SK-N-SH (cell line): ENCODE measurements at regions of chr7 and their contacts with region 1.

Region 1: DNA sequence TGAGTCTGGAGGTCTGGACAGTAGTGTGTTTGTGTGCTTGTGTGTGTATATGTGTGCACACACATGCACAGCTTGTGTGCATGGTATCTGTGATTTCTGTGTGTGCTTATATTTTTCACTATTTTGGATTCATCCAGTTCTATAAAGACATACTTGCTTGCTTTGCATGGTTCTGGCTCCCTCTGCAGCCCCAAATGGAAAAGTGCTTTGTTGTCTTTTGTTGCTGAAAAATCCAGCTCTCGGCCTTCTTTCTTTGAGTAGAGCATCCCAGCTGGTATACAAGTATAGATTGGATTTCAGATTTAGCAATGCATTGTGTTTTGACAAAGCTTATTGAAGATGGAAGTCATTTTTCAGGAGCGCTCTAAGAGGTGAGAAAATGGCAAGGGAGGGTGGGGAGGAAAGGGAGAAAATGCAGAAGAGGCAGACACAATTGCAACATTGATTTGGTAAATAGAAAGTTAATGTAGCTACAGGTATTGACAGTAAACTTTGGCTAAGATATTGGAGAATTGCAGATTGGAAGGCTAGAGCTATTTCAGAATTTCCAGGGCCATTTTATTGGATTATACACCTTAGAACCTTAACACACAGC is 333.9 kb downstream of the AUTS2 start:
- DNase-seq: peak; percentile 61
- H3K4me3 ChIP-seq: no peak overlapping the region
- H3K27ac ChIP-seq: no peak overlapping the region
- H3K4me1 ChIP-seq: peaks cover 0 to 20% of the 10 kb centered on the region in 2 experiments; a peak in 2 of 4 replicates
- H3K27me3 ChIP-seq: no peaks in the 10 kb centered on the region
- CTCF ChIP-seq: peak; percentile 97
- EP300 ChIP-seq: no peak
- RAD21 ChIP-seq: peak; percentile 100

Region 2: DNA sequence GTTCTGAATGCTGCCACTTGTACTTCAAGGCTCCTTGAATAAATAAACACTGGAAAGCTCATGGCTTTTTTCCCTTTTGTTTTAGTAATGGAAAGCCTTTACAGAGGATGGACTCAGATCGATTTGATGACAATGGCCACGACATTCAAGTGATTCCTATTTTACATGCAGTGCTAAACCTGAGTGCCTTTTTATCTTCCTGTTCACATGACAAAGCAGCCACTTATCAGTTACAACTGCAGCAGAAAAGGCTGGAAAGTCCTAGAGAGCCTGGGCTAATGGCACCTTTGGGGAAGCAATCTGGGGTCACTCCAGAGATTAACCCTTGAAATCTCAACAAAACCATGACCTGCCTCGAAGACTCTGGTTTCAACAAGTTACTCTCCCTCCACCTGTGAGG is 582.8 kb before region 1 on chr7:
- CTCF ChIA-PET with region 1: no interaction called
- POLR2A ChIA-PET with region 1: no interaction called
- DNase-seq: no peak
- H3K4me3 ChIP-seq: no peak overlapping the region
- H3K27ac ChIP-seq: no peak overlapping the region
- H3K4me1 ChIP-seq: no peaks in the 10 kb centered on the region
- H3K27me3 ChIP-seq: no peaks in the 10 kb centered on the region
- CTCF ChIP-seq: no peak
- EP300 ChIP-seq: no peak
- RAD21 ChIP-seq: no peak

Region 3: DNA sequence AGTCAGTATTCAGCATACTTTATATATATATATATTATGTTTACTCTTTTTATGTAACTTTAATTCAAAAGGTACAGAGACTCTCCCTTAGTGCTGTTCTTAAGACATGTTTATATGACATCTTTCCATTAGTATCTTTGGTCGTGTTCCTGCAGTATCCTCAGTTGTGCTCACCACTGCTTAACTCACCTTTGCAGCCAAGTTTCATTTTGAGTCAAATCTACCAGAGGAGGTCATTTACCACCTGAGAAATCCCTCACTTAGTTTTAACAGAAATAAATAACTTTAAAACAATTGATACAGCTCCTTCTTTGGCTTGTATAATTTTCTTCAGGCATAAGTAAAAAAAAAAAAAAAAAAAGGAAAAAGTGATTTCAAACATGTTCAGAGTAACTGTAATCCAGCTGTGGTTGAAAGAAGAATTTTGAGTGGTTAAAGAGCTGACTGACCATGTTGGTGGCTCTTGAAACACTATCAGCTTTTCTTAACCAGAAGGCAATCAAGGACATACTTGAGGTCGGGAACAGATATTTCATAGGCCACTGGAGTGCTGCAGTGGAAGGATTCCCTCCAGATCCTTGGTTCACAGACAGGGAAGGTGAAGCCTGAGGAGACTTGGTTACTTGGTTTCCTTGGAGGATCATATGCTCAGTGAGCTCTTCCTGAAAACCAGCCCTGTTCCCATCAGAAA is 217.1 kb before region 1 on chr7:
- CTCF ChIA-PET with region 1: no interaction called
- POLR2A ChIA-PET with region 1: no interaction called
- DNase-seq: no peak
- H3K4me3 ChIP-seq: no peak overlapping the region
- H3K27ac ChIP-seq: no peak overlapping the region
- H3K4me1 ChIP-seq: peaks cover 0 to 3% of the 10 kb centered on the region in 2 experiments; a peak in 1 of 4 replicates
- H3K27me3 ChIP-seq: no peaks in the 10 kb centered on the region
- CTCF ChIP-seq: no peak
- EP300 ChIP-seq: no peak
- RAD21 ChIP-seq: no peak

Region 4: DNA sequence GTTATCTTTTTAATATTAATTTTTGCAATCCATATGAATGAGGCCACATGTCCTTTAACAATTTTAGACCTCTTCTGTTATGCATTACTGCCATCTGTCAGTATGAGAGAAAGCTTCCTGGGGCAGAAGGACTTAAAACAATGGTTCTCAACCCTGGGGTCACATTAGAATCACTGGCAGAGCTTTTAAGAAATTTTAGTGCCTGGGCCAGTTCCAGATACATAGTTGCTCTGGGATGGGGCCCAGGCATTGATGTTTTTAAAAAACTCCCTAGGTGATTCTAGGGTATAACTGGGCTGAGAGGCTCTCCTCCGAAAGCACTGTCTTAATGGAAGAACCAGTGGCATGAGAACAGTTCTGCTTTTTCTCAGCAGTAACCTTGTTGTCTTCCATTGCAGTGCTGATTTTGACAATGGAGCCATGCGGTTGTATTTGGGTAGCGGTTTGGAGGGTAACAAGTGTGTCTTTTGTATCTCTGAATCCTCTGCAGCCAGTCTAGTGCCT is 107.0 kb before region 1 on chr7:
- CTCF ChIA-PET with region 1: interaction called, 15 read pairs
- POLR2A ChIA-PET with region 1: no interaction called
- DNase-seq: peak; percentile 70
- H3K4me3 ChIP-seq: no peak overlapping the region
- H3K27ac ChIP-seq: peak overlapping the region in 1 of 2 experiments; percentile 93; a peak in 2 of 4 replicates
- H3K4me1 ChIP-seq: peaks cover 11 to 22% of the 10 kb centered on the region in 2 experiments
- H3K27me3 ChIP-seq: no peaks in the 10 kb centered on the region
- CTCF ChIP-seq: peak; percentile 40; the same call in 1 of the 2 replicates
- EP300 ChIP-seq: peak in 1 of 2 experiments; percentile 84; a peak in 2 of 4 replicates
- RAD21 ChIP-seq: peak; percentile 83

Region 5: GRCh38 chr7:69906283-69906995 is 25.7 kb before region 1 on chr7:
- CTCF ChIA-PET with region 1: interaction called, 18 read pairs
- POLR2A ChIA-PET with region 1: no interaction called
- DNase-seq: no peak
- H3K4me3 ChIP-seq: no peak overlapping the region
- H3K27ac ChIP-seq: no peak overlapping the region
- H3K4me1 ChIP-seq: peaks cover 10 to 16% of the 10 kb centered on the region in 2 experiments
- H3K27me3 ChIP-seq: no peaks in the 10 kb centered on the region
- CTCF ChIP-seq: no peak
- EP300 ChIP-seq: no peak
- RAD21 ChIP-seq: no peak

Region 6: DNA sequence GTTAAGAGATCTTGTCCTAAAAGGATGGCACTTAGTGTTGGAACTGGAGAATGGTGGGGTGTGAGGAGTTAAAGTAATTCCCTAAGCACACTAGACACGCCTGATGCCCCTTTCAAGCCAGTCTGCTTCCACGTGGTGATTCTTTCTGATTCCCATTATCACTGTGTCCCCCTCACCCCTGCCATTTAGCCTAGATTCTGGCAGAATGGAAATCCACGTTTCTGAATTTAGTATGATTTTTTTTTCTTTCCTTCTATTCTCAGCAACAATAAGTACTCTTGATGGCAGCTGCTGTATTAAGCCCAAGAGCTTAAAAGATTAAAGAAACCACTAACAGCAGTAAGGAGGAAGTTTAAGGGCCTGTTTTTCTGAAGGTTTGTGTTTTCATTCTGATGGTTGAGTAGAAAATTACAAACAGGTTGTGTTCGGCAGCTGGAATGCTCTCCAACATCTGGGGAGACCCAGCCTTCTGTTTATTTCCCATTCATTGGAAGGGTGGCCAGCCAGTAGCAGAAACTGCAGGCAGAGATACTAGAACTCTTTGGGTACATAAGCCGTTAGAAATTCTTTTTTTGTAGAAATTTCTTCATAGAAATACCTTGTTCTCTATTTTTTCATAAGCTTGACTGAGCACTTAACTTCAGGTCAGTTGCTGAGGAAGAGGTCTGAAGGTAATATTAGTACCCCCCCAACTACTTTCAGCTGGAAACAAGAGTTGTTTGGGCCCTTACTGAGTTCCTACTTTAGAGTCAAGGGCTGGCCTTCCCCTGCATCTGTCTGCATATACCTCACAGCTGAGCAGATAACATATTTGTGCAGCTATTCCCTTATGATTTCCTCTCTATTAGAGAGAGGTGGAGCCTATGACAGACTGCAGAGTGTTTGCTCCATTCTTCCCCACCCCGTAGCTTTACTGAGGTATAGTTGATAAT is 21.3 kb after region 1 on chr7:
- CTCF ChIA-PET with region 1: interaction called, 13 read pairs
- POLR2A ChIA-PET with region 1: interaction called, 3 read pairs
- DNase-seq: no peak
- H3K4me3 ChIP-seq: no peak overlapping the region
- H3K27ac ChIP-seq: no peak overlapping the region
- H3K4me1 ChIP-seq: peaks cover 7 to 8% of the 10 kb centered on the region in 2 experiments; a peak in 1 of 4 replicates
- H3K27me3 ChIP-seq: no peaks in the 10 kb centered on the region
- CTCF ChIP-seq: no peak
- EP300 ChIP-seq: no peak
- RAD21 ChIP-seq: no peak

Region 7: DNA sequence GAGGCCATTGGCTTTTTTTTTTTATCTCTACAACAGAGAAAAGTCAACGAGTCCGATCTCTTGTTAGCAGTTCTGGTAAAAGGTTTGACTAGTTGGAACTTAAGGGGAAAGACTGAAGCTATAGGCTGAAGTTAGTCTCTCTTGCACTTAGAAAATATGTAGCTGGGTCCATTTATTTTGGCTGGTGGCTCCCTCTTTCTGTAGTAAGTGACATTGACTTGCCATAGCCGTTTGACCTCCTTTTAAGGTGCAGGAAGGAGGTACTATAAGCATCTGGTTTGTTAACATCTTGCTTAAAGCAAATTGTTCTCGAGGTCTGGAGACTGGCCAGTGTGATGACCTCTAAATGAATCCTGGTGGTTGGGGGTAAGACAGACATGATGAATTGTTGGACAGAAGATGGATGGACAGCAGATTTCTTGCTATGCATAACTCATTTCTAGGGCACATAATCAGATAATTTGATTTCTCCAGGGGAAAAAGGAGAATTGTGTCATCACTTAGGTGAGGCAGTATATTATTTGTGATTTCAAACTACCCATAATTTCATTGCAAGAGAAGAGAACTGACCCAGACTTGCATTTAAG is 843.5 kb after region 1 on chr7:
- CTCF ChIA-PET with region 1: no interaction called
- POLR2A ChIA-PET with region 1: no interaction called
- DNase-seq: no peak
- H3K4me3 ChIP-seq: no peak overlapping the region
- H3K27ac ChIP-seq: 0 out of 4 replicates have a peak overlapping the region, but pooled peaks of 1 of the 2 experiments have one; percentile 18
- H3K4me1 ChIP-seq: peaks cover 0 to 17% of the 10 kb centered on the region in 2 experiments; a peak in 2 of 4 replicates
- H3K27me3 ChIP-seq: no peaks in the 10 kb centered on the region
- CTCF ChIP-seq: peak; percentile 51
- EP300 ChIP-seq: peak in 1 of 2 experiments; percentile 81; a peak in 2 of 4 replicates
- RAD21 ChIP-seq: peak; percentile 59